CD8-positive, alpha-beta T cell (primary cell): ENCODE measurements at regions of chr7 and their contacts with region 1.

Region 1: DNA sequence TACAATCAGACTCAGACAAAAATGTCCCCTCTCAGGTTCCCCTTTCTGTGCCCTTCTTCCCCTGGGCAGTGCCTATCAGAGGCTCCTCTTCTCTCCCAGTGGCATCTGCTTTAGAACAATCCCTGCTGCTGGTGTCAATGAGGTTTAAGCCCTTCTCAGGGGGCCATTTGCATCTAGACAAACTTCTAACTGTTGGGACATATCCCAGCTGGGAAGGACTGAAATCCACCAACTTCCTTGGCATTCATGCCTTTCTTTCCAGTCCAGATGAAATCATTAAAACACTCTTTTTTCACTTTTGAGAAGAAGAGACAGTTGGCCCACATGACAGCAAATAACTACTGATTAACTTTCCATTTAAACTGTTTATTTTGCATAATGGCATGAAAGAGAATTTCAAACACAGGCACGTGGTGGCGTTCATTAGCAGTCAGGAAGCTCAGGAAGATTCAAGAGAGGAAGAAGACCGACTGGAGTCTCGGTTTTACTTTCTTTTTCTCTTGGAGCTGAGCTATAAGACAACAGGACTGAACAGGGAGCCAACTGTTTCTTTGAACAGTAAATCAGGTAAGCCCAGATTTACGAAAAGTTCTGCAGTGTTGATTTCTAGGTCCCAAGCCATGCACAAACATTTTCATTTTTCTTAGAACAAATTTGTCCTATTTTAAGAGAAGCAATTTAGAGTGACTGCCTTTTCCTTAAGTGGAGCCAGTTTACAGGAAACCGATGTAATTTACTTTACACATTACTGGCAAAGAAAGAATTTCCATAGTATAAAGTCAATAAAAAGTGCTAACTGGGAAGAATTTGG is at the start of gene GIMAP2:
- DNase-seq: peak in 3 of 9 experiments; percentile 26 to 81 (median 68)
- ATAC-seq: peak; percentile 77
- H3K4me3 ChIP-seq: peak within 1 kb of the TSS; percentile 62 to 69
- H3K4me3 Mint-ChIP-seq: peak within 1 kb of the TSS; percentile 96
- H3K27ac ChIP-seq: peak within 1 kb of the TSS; percentile 66 to 81
- H3K27ac Mint-ChIP-seq: peak within 1 kb of the TSS; percentile 99
- H3K4me1 ChIP-seq: peaks cover 54% of the 10 kb centered on the region
- H3K4me1 Mint-ChIP-seq: peaks cover 82% of the 10 kb centered on the region
- H3K27me3 ChIP-seq: no peaks in the 10 kb centered on the region
- H3K27me3 Mint-ChIP-seq: no peaks in the 10 kb centered on the region
- CTCF ChIP-seq: no peak
- total RNA-seq, gene GIMAP2: 58.4 to 58.8 TPM

Region 2: DNA sequence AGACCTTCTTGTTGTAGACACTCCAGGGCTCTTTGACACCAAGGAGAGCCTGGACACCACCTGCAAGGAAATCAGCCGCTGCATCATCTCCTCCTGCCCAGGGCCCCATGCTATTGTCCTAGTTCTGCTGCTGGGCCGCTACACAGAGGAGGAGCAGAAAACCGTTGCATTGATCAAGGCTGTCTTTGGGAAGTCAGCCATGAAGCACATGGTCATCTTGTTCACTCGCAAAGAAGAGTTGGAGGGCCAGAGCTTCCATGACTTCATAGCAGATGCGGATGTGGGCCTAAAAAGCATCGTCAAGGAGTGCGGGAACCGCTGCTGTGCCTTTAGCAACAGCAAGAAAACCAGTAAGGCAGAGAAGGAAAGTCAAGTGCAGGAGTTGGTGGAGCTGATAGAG is 165.3 kb before region 1 on chr7:
- CTCF ChIA-PET with region 1: interaction called, 4 read pairs
- POLR2A ChIA-PET with region 1: interaction called, 19 read pairs
- intact Hi-C with region 1: no loop called
- DNase-seq: peak in 6 of 9 experiments; percentile 9 to 75 (median 33)
- ATAC-seq: peak; percentile 27
- H3K4me3 ChIP-seq: peak overlapping the region; percentile 58 to 76
- H3K4me3 Mint-ChIP-seq: peak overlapping the region; percentile 100
- H3K27ac ChIP-seq: peak overlapping the region; percentile 58 to 75
- H3K27ac Mint-ChIP-seq: peak overlapping the region; percentile 91
- H3K4me1 ChIP-seq: peaks cover 12% of the 10 kb centered on the region
- H3K4me1 Mint-ChIP-seq: peaks cover 44% of the 10 kb centered on the region
- H3K27me3 ChIP-seq: no peaks in the 10 kb centered on the region
- H3K27me3 Mint-ChIP-seq: no peaks in the 10 kb centered on the region
- CTCF ChIP-seq: no peak

Region 3: DNA sequence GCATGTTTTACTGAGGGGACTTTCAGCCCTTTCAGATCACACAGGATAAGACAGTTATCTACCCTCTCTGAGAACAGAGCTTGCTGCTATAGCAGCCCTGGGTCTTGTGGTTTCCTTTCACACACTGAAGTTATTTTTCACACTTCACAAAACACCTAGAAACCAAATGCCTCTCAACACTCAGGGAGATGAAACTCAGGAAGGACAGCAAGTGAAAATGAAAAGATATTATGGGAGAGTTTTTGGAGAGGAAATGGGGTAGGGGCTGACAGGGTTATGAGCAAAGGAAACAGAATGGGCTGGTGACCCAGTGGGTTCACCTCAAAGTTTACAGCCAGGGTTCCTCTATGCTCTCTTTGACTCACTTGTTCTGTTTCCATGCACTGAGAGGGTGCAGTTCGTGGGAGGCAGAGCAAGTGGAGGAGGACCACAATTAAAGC is 16.9 kb before region 1 on chr7:
- CTCF ChIA-PET with region 1: interaction called, 3 read pairs
- POLR2A ChIA-PET with region 1: interaction called, 23 read pairs
- intact Hi-C with region 1: loop called (anchors 2 kb)
- DNase-seq: peak in 6 of 9 experiments; percentile 60 to 94 (median 72)
- ATAC-seq: peak; percentile 76
- H3K4me3 ChIP-seq: peak overlapping the region in 1 of 2 experiments; percentile 17
- H3K4me3 Mint-ChIP-seq: peak overlapping the region; percentile 36
- H3K27ac ChIP-seq: peak overlapping the region; percentile 63 to 95
- H3K27ac Mint-ChIP-seq: peak overlapping the region; percentile 97
- H3K4me1 ChIP-seq: peaks cover 88% of the 10 kb centered on the region
- H3K4me1 Mint-ChIP-seq: peaks cover 90% of the 10 kb centered on the region
- H3K27me3 ChIP-seq: no peaks in the 10 kb centered on the region
- H3K27me3 Mint-ChIP-seq: no peaks in the 10 kb centered on the region
- CTCF ChIP-seq: no peak

Region 4: GRCh38 chr7:150722431-150722931 is 37.1 kb after region 1 on chr7:
- CTCF ChIA-PET with region 1: interaction called, 17 read pairs
- POLR2A ChIA-PET with region 1: interaction called, 93 read pairs
- intact Hi-C with region 1: no loop called
- DNase-seq: peak in 1 of 9 experiments; percentile 47
- ATAC-seq: no peak
- H3K4me3 ChIP-seq: peak overlapping the region; percentile 20 to 23
- H3K4me3 Mint-ChIP-seq: peak overlapping the region; percentile 95
- H3K27ac ChIP-seq: peak overlapping the region; percentile 1 to 24
- H3K27ac Mint-ChIP-seq: peak overlapping the region; percentile 96
- H3K4me1 ChIP-seq: peaks cover 57% of the 10 kb centered on the region
- H3K4me1 Mint-ChIP-seq: peaks cover 78% of the 10 kb centered on the region
- H3K27me3 ChIP-seq: no peaks in the 10 kb centered on the region
- H3K27me3 Mint-ChIP-seq: no peaks in the 10 kb centered on the region
- CTCF ChIP-seq: no peak